ENCODE measurements at regions of chr21 and their contacts with region 1.

Region 1: GRCh38 chr21:26850108-26850643 is 5.0 kb upstream of the ADAMTS1 start:
- DNase-seq: peak; percentile 51
- H3K4me3 ChIP-seq: no peak overlapping the region; a peak in 1 of 4 replicates
- H3K27ac ChIP-seq: peak overlapping the region in 1 of 2 experiments; percentile 53; a peak in 1 of 4 replicates
- H3K4me1 ChIP-seq: peaks cover 0 to 14% of the 10 kb centered on the region in 2 experiments; a peak in 2 of 4 replicates
- H3K27me3 ChIP-seq: no peaks in the 10 kb centered on the region
- CTCF ChIP-seq: peak; percentile 74
- EP300 ChIP-seq: no peak
- RAD21 ChIP-seq: peak; percentile 74

Region 2: DNA sequence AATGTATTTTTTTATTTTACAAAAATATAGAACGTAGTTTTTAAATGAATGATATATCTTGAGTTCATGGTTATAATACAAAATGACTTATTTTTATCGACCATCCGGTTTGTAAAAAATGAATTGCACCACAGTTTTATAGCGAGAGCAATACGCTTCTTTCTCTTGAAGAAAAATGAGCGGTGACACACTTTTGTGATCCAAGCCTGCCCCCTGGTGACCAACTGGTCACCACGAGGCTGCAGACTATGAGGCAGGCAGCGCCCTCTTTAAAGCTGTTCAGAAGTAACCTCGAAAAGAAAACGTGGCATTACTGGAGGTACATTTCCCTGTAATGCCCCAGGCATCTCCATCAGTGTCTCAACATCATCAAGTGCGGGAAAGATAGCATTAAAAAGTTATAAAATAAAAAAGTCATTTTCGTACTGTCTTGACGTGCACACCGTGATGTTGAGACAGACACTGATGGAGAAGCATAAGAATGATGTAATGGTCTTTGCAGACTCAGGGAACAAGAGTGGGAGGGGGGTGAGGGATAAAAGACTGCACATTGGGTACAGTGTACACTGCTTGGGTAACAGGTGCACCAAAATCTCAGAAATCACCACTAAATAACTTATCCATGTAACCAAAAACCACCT is 850.9 kb after region 1 on chr21:
- CTCF ChIA-PET with region 1: interaction called, 42 read pairs
- POLR2A ChIA-PET with region 1: interaction called, 3 read pairs
- DNase-seq: peak; percentile 59
- H3K4me3 ChIP-seq: peak overlapping the region in 1 of 2 experiments; percentile 42; a peak in 1 of 4 replicates
- H3K27ac ChIP-seq: peak overlapping the region in 1 of 2 experiments; percentile 44; a peak in 1 of 4 replicates
- H3K4me1 ChIP-seq: peaks cover 0 to 2% of the 10 kb centered on the region in 2 experiments; a peak in 2 of 4 replicates
- H3K27me3 ChIP-seq: no peaks in the 10 kb centered on the region
- CTCF ChIP-seq: peak; percentile 86
- EP300 ChIP-seq: no peak
- RAD21 ChIP-seq: peak; percentile 97